ENCODE measurements at regions of chr7 and their contacts with region 1.

Region 1: GRCh38 chr7:55280031-55280454 is 85.1 kb upstream of the LANCL2 start:
- DNase-seq: no peak
- H3K4me3 ChIP-seq: no peak overlapping the region
- CTCF ChIP-seq: peak; percentile 61

Region 2: GRCh38 chr7:55299273-55299967 is 19.4 kb after region 1 on chr7:
- CTCF ChIA-PET with region 1: interaction called, 13 read pairs
- POLR2A ChIA-PET with region 1: no interaction called
- DNase-seq: no peak
- H3K4me3 ChIP-seq: no peak overlapping the region
- CTCF ChIP-seq: no peak

Region 3: DNA sequence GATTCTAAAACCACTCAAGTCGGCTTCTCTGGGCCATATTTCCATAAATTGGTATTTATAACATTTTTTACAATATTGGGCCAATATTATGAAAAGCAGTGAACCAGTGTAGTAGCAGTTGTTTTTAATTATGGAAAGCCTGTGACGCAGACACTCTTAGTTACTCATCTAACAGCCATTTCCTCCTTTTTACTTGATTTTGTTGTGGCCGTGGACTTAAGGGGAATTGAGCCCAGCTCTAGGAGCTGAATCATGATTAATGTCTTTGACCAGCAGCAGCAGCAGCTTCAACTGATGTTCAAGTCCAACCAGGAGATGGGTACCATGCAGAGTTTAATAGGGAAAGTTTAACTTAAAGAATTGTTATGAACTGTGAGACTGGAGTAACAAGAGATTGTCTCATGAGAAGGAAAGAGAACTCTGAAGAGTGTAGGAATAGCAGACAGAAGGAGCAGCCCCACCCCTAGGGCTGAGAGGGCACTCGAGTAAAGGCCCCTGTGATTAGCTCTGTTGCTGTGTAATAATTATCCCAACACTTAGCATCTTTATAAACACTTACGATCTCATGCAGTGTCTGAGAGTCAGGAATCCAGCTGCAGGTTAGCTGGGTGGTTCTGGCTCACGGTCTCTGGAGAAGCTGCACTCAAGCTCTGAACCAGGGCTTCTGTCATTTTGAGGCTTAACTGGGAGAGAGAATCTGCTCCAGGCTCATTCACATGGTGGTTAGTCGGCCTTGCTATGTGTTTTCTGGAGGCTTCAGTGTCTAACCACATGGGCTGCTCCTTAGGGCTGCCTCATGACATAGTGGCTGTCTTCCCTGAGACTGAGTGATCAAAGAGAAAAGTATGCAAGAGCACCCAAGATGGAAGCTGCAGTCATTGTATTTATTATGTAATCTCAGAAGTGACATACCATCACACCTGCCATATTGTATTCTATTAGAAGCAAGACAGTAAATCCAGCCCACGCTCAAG is 89.7 kb after region 1 on chr7:
- CTCF ChIA-PET with region 1: interaction called, 14 read pairs
- POLR2A ChIA-PET with region 1: no interaction called
- DNase-seq: peak; percentile 83
- H3K4me3 ChIP-seq: peak overlapping the region; percentile 19; the same call in 1 of the 2 replicates
- CTCF ChIP-seq: no peak

Region 4: DNA sequence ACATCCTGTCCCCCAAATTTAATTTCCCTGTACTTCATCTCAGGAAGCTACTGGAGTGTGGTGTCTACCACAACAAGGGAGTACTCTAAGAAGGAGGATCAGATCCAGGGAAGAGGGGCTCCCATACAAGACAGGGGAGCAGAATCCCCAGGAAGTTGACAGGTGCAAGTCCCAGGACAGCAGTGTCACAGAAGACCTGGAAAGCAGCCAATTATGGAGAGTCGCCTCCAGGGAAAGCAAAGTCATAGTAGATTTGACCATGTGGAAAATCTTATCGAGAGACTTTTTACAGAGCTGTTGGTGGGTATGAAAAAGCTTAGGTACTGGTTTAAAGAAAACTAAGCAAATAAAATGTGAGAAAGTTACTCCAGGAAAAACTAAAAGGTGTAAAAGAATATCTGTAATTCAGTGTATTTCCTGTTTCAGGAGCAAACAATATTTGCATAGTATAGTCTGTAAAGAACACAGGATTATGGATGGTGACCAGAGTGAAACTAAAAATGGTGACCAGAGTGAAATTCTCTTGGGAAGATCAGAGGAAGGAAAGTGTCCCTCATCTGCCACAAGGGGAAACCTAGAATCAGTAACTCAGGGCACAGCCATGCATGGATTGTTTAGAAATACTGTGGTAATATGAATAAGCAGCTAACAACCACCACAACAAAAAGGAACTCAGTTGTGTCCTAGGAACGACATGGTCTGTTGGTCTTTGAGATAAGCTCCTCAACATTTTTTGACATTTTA is 129.6 kb after region 1 on chr7:
- CTCF ChIA-PET with region 1: interaction called, 248 read pairs
- POLR2A ChIA-PET with region 1: no interaction called
- DNase-seq: no peak
- H3K4me3 ChIP-seq: no peak overlapping the region
- CTCF ChIP-seq: no peak

Region 5: GRCh38 chr7:55423277-55423711 is 143.3 kb after region 1 on chr7:
- CTCF ChIA-PET with region 1: interaction called, 248 read pairs
- POLR2A ChIA-PET with region 1: no interaction called
- DNase-seq: no peak
- H3K4me3 ChIP-seq: no peak overlapping the region
- CTCF ChIP-seq: peak; percentile 44

Region 6: GRCh38 chr7:55641273-55641691 is 361.2 kb after region 1 on chr7:
- CTCF ChIA-PET with region 1: interaction called, 18 read pairs
- POLR2A ChIA-PET with region 1: no interaction called
- DNase-seq: peak; percentile 59
- H3K4me3 ChIP-seq: no peak overlapping the region
- CTCF ChIP-seq: peak; percentile 70